ENCODE measurements at regions of chr4 and their contacts with region 1.

Region 1: DNA sequence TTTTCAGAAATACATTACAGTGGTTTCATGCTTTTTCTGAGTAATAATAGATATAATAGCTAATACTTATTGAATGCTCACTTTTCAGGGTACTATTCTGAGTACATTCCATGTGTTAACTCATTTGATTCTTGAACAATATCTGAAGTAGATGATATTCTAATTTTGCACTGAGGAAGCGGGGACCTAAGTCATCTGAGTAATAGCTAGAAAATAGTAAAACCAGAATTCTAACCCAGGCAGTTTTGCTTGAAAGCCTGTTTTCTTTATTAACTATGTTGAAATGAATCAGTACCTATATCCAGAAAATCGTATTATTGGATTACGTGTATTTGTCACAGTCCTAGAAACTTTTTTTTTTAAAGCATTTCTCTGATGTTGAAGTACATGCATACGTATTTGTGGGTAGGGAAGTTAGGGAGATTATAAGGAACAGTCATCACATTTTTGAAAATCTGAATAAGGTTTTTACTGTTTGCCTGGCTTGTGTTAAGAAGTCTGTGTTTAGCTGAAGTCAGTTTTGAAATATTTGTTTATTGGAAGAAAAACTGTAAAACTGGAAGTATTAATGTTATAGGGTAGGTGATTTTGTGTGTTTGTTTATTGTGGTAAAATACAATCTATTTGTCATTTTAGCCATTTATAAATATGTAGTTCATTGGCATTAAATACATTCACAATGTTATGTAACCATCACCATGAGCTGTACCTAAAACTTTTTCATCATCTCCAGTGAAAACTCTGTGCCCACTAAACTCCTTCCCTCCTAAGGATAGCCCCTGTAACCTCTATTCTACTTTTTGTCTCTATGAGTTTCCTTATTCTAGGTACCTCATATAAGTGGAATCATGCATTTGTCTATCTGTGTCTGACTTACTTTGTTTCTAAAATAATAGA is 55.3 kb downstream of the FIP1L1 start:
- DNase-seq: no peak
- H3K4me3 ChIP-seq: no peak overlapping the region
- H3K27ac ChIP-seq: no peak overlapping the region
- H3K27me3 ChIP-seq: no peaks in the 10 kb centered on the region
- CTCF ChIP-seq: no peak

Region 2: DNA sequence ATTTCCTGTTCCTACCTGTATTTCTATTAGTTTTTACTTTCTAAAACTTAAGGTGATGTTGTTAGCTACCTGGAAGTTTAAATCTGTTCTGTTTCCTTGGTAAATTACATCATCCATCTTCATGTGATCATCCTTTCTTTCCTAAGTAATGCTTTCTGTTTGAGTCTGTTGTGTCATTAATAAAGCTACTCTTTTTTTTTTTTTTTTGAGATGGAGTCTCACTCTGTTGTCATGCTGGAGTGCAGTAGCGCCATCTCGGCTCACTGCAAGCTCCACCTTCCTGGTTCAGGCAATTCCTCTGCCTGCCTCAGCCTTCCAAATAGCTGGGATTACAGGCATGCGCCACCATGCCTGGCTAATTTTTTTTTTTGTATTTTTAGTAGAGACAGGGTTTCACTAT is 18.0 kb after region 1 on chr4:
- CTCF ChIA-PET with region 1: no interaction called
- POLR2A ChIA-PET with region 1: no interaction called
- DNase-seq: no peak
- H3K4me3 ChIP-seq: no peak overlapping the region
- H3K27ac ChIP-seq: no peak overlapping the region
- H3K27me3 ChIP-seq: no peaks in the 10 kb centered on the region
- CTCF ChIP-seq: no peak

Region 3: GRCh38 chr4:53840643-53841042 is 407.9 kb after region 1 on chr4:
- CTCF ChIA-PET with region 1: no interaction called
- POLR2A ChIA-PET with region 1: interaction called, 13 read pairs
- DNase-seq: no peak
- H3K4me3 ChIP-seq: no peak overlapping the region
- H3K27ac ChIP-seq: no peak overlapping the region
- H3K27me3 ChIP-seq: no peaks in the 10 kb centered on the region
- CTCF ChIP-seq: no peak